ENCODE measurements at regions of chr12 and their contacts with region 1.

Region 1: GRCh38 chr12:51341259-51342007 is 5.0 kb downstream of the CELA1 start:
- DNase-seq: peak; percentile 73 to 84
- H3K4me3 ChIP-seq: peak overlapping the region; percentile 27
- H3K4me3 Mint-ChIP-seq: peak overlapping the region; percentile 67
- H3K27ac Mint-ChIP-seq: peak overlapping the region; percentile 79
- H3K4me1 ChIP-seq: peaks cover 10% of the 10 kb centered on the region
- H3K4me1 Mint-ChIP-seq: peaks cover 24% of the 10 kb centered on the region
- H3K27me3 ChIP-seq: no peaks in the 10 kb centered on the region
- H3K27me3 Mint-ChIP-seq: no peaks in the 10 kb centered on the region
- CTCF ChIP-seq: peak; percentile 99

Region 2: GRCh38 chr12:50825372-50825838 is 516.0 kb before region 1 on chr12:
- CTCF ChIA-PET with region 1: interaction called, 9 read pairs
- POLR2A ChIA-PET with region 1: no interaction called
- intact Hi-C with region 1: loop called (anchors 10 kb)
- DNase-seq: peak in 1 of 2 experiments; percentile 51
- H3K4me3 ChIP-seq: no peak overlapping the region
- H3K4me3 Mint-ChIP-seq: peak overlapping the region; percentile 10
- H3K27ac Mint-ChIP-seq: peak overlapping the region; percentile 9
- H3K4me1 ChIP-seq: no peaks in the 10 kb centered on the region
- H3K4me1 Mint-ChIP-seq: no peaks in the 10 kb centered on the region
- H3K27me3 ChIP-seq: no peaks in the 10 kb centered on the region
- H3K27me3 Mint-ChIP-seq: no peaks in the 10 kb centered on the region
- CTCF ChIP-seq: peak; percentile 46 to 57

Region 3: DNA sequence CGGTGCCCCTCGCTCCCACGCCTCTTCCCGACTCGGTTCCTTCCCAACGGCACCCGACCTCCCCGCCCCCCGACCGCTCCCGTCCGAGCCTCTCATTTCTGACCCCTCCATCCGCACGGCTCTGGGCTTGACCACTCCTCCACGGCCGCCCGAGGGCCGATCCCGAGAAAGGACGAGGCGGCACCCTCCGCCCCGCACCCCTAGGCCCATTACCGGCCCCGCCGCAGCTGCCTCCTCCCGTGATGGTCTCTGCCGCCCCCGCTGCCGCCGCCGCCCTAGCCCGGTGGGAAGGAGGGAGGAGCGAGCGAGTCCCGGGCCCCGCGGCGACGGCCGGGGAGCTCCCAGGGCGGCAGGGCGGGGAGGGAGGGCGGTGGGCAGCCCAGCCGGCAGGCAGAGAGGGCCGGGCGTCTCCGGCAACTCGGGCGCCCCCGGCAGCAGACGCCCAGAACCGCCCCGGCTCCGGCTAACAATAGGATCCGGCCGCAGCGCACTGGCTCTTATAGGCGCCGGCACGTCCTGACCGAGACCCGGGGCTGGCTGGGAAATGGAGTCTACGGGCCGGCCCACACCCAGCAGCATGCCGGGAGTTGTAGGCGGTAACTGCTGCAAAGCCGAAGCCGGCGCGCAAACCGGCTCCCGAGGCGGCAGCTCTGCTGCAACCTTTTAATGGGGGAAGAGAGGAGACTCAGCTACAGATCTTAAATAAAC is 258.2 kb before region 1 on chr12 and contains the start of gene CSRNP2:
- CTCF ChIA-PET with region 1: no interaction called
- POLR2A ChIA-PET with region 1: no interaction called
- intact Hi-C with region 1: loop called (anchors 2 kb)
- DNase-seq: peak; percentile 98 to 99
- H3K4me3 ChIP-seq: peak within 1 kb of the TSS; percentile 85
- H3K4me3 Mint-ChIP-seq: peak within 1 kb of the TSS; percentile 96
- H3K27ac Mint-ChIP-seq: peak within 1 kb of the TSS; percentile 94
- H3K4me1 ChIP-seq: peaks cover 10% of the 10 kb centered on the region; the same call in 1 of the 2 replicates
- H3K4me1 Mint-ChIP-seq: peaks cover 16% of the 10 kb centered on the region
- H3K27me3 ChIP-seq: no peaks in the 10 kb centered on the region
- H3K27me3 Mint-ChIP-seq: no peaks in the 10 kb centered on the region
- CTCF ChIP-seq: peak in 1 of 2 experiments; percentile 2
- total RNA-seq, gene CSRNP2: 39.7 and 44.0 TPM in 2 replicates

Region 4: GRCh38 chr12:51217968-51218606 is 123.3 kb before region 1 on chr12 and contains the start of gene POU6F1:
- CTCF ChIA-PET with region 1: interaction called, 10 read pairs
- POLR2A ChIA-PET with region 1: no interaction called
- intact Hi-C with region 1: no loop called
- DNase-seq: peak; percentile 77 to 87
- H3K4me3 ChIP-seq: peak within 1 kb of the TSS; percentile 89
- H3K4me3 Mint-ChIP-seq: peak within 1 kb of the TSS; percentile 76
- H3K27ac Mint-ChIP-seq: peak within 1 kb of the TSS; percentile 94
- H3K4me1 ChIP-seq: peaks cover 6% of the 10 kb centered on the region; the same call in 1 of the 2 replicates
- H3K4me1 Mint-ChIP-seq: peaks cover 20% of the 10 kb centered on the region
- H3K27me3 ChIP-seq: no peaks in the 10 kb centered on the region
- H3K27me3 Mint-ChIP-seq: no peaks in the 10 kb centered on the region
- CTCF ChIP-seq: peak; percentile 75 to 84
- total RNA-seq, gene POU6F1: 4.1 and 5.3 TPM in 2 replicates

Region 5: GRCh38 chr12:51270067-51270970 is 71.1 kb before region 1 on chr12 and contains the start of gene SMAGP:
- CTCF ChIA-PET with region 1: interaction called, 104 read pairs
- POLR2A ChIA-PET with region 1: interaction called, 51 read pairs
- intact Hi-C with region 1: loop called (anchors 1 kb)
- DNase-seq: peak; percentile 94 to 99
- H3K4me3 ChIP-seq: peak within 1 kb of the TSS; percentile 85
- H3K4me3 Mint-ChIP-seq: peak within 1 kb of the TSS; percentile 87
- H3K27ac Mint-ChIP-seq: peak within 1 kb of the TSS; percentile 99
- H3K4me1 ChIP-seq: peaks cover 21% of the 10 kb centered on the region
- H3K4me1 Mint-ChIP-seq: peaks cover 19% of the 10 kb centered on the region
- H3K27me3 ChIP-seq: no peaks in the 10 kb centered on the region
- H3K27me3 Mint-ChIP-seq: no peaks in the 10 kb centered on the region
- CTCF ChIP-seq: peak; percentile 1 to 12
- total RNA-seq, gene SMAGP: 95.1 and 108 TPM in 2 replicates

Region 6: DNA sequence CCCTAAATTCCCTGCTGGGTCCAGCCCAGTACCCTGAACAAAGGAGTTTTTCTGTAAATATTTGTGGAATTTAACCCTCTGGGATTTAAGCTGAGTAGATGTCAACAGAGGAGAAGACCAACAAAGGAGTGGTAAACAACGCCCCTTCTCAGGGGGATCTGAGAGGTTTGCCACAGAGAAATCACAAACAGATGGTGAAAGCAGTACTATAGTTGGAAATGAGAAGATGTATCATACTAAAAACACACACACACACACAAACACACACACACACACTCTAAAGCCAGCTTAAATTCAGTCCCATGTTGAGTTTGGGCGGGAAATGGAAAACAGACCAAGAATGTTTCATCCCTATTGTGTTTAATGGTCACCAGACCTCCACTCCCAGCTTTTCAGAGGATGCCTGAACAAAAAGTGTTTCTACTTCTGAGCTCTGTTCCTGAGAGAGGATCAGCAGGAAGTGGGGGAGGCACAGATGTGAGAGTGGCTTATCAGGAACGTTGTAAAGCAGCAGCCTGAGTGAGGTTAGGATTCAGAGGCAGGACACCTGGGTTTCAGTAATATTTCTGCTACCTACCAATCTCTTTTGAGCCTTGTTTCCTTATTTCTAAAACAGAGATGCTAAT is 20.6 kb before region 1 on chr12:
- CTCF ChIA-PET with region 1: interaction called, 19 read pairs
- POLR2A ChIA-PET with region 1: interaction called, 14 read pairs
- intact Hi-C with region 1: loop called (anchors 1 kb)
- DNase-seq: peak; percentile 53 to 60
- H3K4me3 ChIP-seq: no peak overlapping the region
- H3K4me3 Mint-ChIP-seq: peak overlapping the region; percentile 34
- H3K27ac Mint-ChIP-seq: peak overlapping the region; percentile 81
- H3K4me1 ChIP-seq: peaks cover 59% of the 10 kb centered on the region
- H3K4me1 Mint-ChIP-seq: peaks cover 62% of the 10 kb centered on the region
- H3K27me3 ChIP-seq: no peaks in the 10 kb centered on the region
- H3K27me3 Mint-ChIP-seq: no peaks in the 10 kb centered on the region
- CTCF ChIP-seq: no peak

Region 7: DNA sequence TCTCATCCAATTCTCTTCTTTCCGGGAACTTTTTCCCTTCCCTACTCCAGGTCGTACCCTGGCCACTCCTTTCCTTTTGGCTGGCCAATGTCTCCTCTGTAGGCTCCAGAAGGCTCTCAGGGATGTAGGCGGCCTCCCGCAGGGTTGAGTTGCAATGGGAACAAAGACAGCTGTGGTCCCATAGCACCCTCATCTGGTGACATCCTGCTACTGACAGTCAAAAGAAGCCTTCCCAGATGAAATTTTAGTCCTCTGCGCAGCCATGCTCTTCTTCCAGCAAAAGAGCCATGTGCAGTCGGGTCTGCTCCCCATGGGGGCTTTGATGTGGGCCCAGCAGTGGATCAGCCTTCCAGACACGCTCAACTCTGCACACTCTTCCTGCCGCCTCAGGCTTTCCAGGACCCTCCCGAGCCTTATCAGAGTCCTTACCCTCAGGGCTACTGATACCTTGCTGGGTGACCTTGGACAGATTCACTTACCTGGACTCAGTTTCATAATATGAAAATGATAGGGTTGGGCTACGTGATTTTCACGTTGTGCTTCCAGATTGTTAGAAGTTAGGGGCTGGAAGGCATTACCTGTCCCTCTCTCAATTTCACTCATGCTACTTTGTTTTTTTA is 10.6 kb after region 1 on chr12:
- CTCF ChIA-PET with region 1: interaction called, 14 read pairs
- POLR2A ChIA-PET with region 1: interaction called, 3 read pairs
- intact Hi-C with region 1: no loop called
- DNase-seq: peak; percentile 52 to 65
- H3K4me3 ChIP-seq: no peak overlapping the region
- H3K4me3 Mint-ChIP-seq: no peak overlapping the region
- H3K27ac Mint-ChIP-seq: no peak overlapping the region
- H3K4me1 ChIP-seq: 0 out of 2 replicates have a peak, but pooled peaks cover 10% of the 10 kb centered on the region
- H3K4me1 Mint-ChIP-seq: peaks cover 11% of the 10 kb centered on the region
- H3K27me3 ChIP-seq: no peaks in the 10 kb centered on the region
- H3K27me3 Mint-ChIP-seq: no peaks in the 10 kb centered on the region
- CTCF ChIP-seq: peak; percentile 64 to 65

Measured in Caco-2 (cell line).